IMR-90 (cell line): ENCODE measurements at regions of chr7 and their contacts with region 1.

Region 1: DNA sequence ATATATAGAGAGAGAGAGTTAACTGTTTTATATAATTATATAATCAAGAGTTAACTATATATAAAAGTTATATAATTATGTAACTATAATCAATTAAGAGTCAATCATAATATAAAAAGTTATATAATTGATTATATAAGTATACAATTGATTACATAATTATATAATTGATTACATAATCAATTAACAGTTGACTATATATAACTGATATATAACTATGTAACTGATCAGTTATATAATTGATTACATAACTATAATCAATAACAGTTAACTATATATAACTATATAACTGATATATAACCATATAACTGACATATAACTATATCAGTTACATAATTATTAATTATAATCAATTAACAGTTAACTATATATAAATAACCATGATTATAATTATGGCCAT is 140.1 kb downstream of the HERPUD2 start:
- DNase-seq: no peak
- ATAC-seq: no peak
- H3K4me3 ChIP-seq: no peak overlapping the region
- H3K27ac ChIP-seq: no peak overlapping the region
- H3K4me1 ChIP-seq: no peaks in the 10 kb centered on the region
- H3K27me3 ChIP-seq: peaks cover 12% of the 10 kb centered on the region
- CTCF ChIP-seq: no peak
- POLR2A ChIP-seq: no peak
- RAD21 ChIP-seq: no peak

Region 2: DNA sequence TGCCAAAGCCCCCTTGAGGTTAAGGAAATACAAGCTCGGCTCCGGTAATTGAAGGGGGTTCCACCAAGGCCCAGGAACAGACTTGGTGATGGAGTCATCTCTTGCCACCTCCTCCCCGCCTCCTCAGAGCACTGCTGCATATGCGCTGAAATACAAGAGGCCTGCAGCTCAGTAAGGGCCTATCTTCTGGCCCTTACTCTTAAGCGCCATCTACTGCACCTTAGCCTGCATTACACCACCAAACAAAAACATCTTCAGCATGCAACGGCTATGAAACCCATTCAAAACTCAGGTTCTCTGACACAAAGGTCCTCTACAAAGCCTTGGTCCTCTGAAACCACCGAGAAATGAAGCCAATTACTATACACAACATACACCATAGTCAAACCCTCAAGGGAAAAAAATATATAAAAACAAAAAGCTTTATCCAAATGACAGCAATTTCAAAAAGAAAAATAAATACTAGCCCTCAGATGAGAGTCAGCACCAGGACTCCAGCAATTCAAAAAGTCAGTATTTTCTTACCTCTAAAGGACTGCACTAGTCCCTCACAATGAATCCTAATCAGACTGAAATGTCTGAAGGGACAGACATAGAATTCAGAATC is 124.2 kb before region 1 on chr7:
- CTCF ChIA-PET with region 1: no interaction called
- POLR2A ChIA-PET with region 1: no interaction called
- dilution Hi-C with region 1: no loop called
- in situ Hi-C with region 1: no loop called
- intact Hi-C with region 1: no loop called
- DNase-seq: no peak
- ATAC-seq: no peak
- H3K4me3 ChIP-seq: no peak overlapping the region
- H3K27ac ChIP-seq: no peak overlapping the region
- H3K4me1 ChIP-seq: no peaks in the 10 kb centered on the region
- H3K27me3 ChIP-seq: no peaks in the 10 kb centered on the region
- CTCF ChIP-seq: peak; percentile 34; the same call in 1 of the 2 replicates
- POLR2A ChIP-seq: no peak
- RAD21 ChIP-seq: 0 out of 2 replicates have a peak, but pooled peaks have one; percentile 21

Region 3: GRCh38 chr7:35526645-35527044 is 28.2 kb before region 1 on chr7:
- CTCF ChIA-PET with region 1: no interaction called
- POLR2A ChIA-PET with region 1: no interaction called
- dilution Hi-C with region 1: no loop called
- in situ Hi-C with region 1: no loop called
- intact Hi-C with region 1: loop called (anchors 1 kb)
- DNase-seq: no peak
- ATAC-seq: no peak
- H3K4me3 ChIP-seq: no peak overlapping the region
- H3K27ac ChIP-seq: no peak overlapping the region
- H3K4me1 ChIP-seq: no peaks in the 10 kb centered on the region
- H3K27me3 ChIP-seq: peaks cover 14% of the 10 kb centered on the region
- CTCF ChIP-seq: no peak
- POLR2A ChIP-seq: no peak
- RAD21 ChIP-seq: no peak

Region 4: DNA sequence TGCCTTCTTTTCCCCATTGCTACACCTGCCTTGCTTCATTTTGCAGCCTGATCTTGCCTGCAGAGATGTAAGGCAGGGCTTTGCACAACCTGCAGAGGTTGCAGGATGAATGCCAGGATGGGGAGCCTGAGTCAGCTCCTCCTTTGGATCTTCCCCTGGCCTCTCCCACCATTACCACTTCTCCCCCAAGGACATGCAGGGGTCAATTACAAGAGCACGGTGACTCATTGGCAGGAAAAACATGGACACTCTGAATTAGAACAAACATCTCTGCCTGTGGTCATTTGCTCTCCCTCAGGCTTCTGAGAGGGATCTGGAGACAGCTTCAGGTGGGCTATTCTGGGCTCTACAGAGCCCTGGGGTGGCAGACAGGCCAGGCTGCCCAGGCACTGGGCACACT is 50.9 kb after region 1 on chr7:
- CTCF ChIA-PET with region 1: no interaction called
- POLR2A ChIA-PET with region 1: no interaction called
- dilution Hi-C with region 1: no loop called
- in situ Hi-C with region 1: no loop called
- intact Hi-C with region 1: no loop called
- DNase-seq: peak; percentile 82
- ATAC-seq: peak; percentile 91
- H3K4me3 ChIP-seq: no peak overlapping the region
- H3K27ac ChIP-seq: peak overlapping the region; percentile 50
- H3K4me1 ChIP-seq: peaks cover 13% of the 10 kb centered on the region
- H3K27me3 ChIP-seq: no peaks in the 10 kb centered on the region
- CTCF ChIP-seq: no peak
- POLR2A ChIP-seq: no peak
- RAD21 ChIP-seq: no peak

Region 5: GRCh38 chr7:35865287-35865686 is 310.5 kb after region 1 on chr7:
- CTCF ChIA-PET with region 1: no interaction called
- POLR2A ChIA-PET with region 1: no interaction called
- dilution Hi-C with region 1: no loop called
- in situ Hi-C with region 1: no loop called
- intact Hi-C with region 1: no loop called
- DNase-seq: no peak
- ATAC-seq: no peak
- H3K4me3 ChIP-seq: no peak overlapping the region
- H3K27ac ChIP-seq: no peak overlapping the region
- H3K4me1 ChIP-seq: no peaks in the 10 kb centered on the region; the same call in none of the 2 replicates
- H3K27me3 ChIP-seq: no peaks in the 10 kb centered on the region
- CTCF ChIP-seq: no peak
- POLR2A ChIP-seq: no peak
- RAD21 ChIP-seq: no peak